ENCODE measurements at regions of chr15 and their contacts with region 1.

Region 1: DNA sequence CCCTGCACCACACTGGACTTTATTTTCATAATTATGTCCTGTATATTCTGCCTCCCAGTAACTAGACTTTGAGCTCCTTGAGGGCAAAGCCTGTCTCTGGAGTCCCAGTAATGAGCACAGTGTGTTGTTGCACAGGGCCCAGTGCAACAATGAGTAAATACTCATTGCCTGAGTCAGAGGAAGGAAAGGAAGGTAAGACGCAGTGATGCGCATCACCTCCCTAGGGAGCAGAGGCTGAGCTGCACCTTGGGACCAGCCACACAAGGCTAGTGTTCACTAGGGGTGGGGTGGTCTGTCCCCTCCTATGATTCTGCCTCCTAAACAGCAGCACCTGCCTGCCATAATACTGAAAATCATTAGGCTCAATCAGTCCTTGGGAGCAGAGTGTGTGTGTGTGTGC is 86.6 kb upstream of the ADAMTSL3 start:
- DNase-seq: no peak
- H3K4me3 Mint-ChIP-seq: no peak overlapping the region
- H3K27ac Mint-ChIP-seq: no peak overlapping the region
- H3K4me1 Mint-ChIP-seq: no peaks in the 10 kb centered on the region
- H3K27me3 Mint-ChIP-seq: no peaks in the 10 kb centered on the region

Region 2: GRCh38 chr15:84023636-84024035 is 456.3 kb after region 1 on chr15:
- CTCF ChIA-PET with region 1: interaction called, 4 read pairs
- intact Hi-C with region 1: loop called (anchors 5 kb)
- DNase-seq: peak; percentile 35
- H3K4me3 Mint-ChIP-seq: no peak overlapping the region
- H3K27ac Mint-ChIP-seq: no peak overlapping the region
- H3K4me1 Mint-ChIP-seq: no peaks in the 10 kb centered on the region
- H3K27me3 Mint-ChIP-seq: peaks cover 15% of the 10 kb centered on the region